Psoas muscle (tissue), 8 donors: ENCODE measurements at regions of chr12 and their contacts with region 1.

Region 1: GRCh38 chr12:119412811-119413794 is 78.6 kb downstream of the CCDC60 start:
- DNase-seq: peak; percentile 47 to 56
- ATAC-seq: peak; percentile 61 to 83 (median 72)
- H3K4me3 ChIP-seq: no peak overlapping the region
- H3K27ac ChIP-seq: no peak overlapping the region
- H3K4me1 ChIP-seq: peaks cover 4% of the 10 kb centered on the region
- H3K27me3 ChIP-seq: no peaks in the 10 kb centered on the region
- CTCF ChIP-seq: peak; percentile 90

Region 2: GRCh38 chr12:118979763-118980406 is 433.2 kb before region 1 on chr12:
- intact Hi-C with region 1: loop called (anchors 2 to 10 kb)
- DNase-seq: no peak
- ATAC-seq: peak in 3 of 4 donors; percentile 42 to 56 (median 53)
- H3K4me3 ChIP-seq: no peak overlapping the region
- H3K27ac ChIP-seq: no peak overlapping the region
- H3K4me1 ChIP-seq: no peaks in the 10 kb centered on the region
- H3K27me3 ChIP-seq: peaks cover 4 to 68% (median 19%) of the 10 kb centered on the region in 3 donors
- CTCF ChIP-seq: peak; percentile 61

Region 3: DNA sequence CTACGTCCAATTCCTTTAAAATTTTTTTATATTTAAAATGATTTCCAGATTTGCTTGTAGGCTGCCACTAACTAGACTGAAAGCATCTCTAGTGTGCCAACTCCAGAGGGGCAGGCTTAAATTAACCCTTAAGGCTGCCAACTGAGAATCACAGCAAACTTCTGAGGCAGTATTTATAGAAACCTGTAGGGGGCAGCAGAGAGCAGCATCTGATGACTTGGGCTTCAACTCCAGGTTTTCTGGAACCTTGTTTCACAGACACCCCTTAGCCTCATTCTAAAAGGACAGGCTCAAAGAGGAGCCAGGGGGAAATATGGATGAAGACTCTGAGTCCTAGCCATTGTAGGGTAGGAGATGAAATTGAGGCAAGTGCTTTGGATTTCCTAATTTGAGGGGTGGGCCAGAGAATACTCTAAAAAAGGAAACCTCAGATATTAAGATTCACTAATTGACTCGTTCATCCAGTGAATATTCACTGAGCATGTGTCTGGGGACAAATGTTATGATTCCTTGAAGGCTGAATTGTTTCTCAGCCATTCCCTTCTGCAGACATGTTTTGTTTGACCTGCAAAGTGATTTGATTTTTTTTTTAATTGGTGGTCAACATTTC is 297.7 kb before region 1 on chr12:
- intact Hi-C with region 1: loop called (anchors 1 to 2 kb)
- DNase-seq: no peak
- ATAC-seq: peak; percentile 81 to 90 (median 84)
- H3K4me3 ChIP-seq: peak overlapping the region; percentile 35
- H3K27ac ChIP-seq: no peak overlapping the region
- H3K4me1 ChIP-seq: peaks cover 15% of the 10 kb centered on the region
- H3K27me3 ChIP-seq: no peaks in the 10 kb centered on the region
- CTCF ChIP-seq: peak; percentile 94

Region 4: DNA sequence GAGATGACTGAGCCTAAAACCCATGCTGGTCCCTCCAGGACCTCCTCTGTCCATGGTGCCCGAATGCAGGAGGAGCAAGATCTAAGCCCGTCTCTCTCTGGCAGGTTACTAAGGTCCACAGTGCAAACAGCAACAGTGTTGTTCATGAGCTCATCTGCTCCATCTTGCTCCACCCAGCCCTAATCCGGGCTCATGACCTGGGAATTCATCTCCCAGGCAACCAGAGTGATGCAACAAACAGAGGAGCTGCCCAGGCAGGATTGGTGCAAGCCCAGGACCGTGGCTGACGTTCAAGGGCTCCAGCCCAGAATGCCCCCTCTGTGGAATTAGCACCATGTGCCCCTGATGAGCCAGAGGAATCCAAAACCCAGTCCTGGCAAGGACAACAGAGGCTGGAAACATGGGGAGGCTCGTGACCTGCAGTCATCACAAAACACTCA is 204.5 kb before region 1 on chr12:
- intact Hi-C with region 1: loop called in 1 of 2 experiments (anchors 10 kb)
- DNase-seq: peak; percentile 85 to 94
- ATAC-seq: peak; percentile 80 to 90 (median 87)
- H3K4me3 ChIP-seq: no peak overlapping the region
- H3K27ac ChIP-seq: peak overlapping the region; percentile 32
- H3K4me1 ChIP-seq: peaks cover 20% of the 10 kb centered on the region
- H3K27me3 ChIP-seq: peaks cover 0 to 2% (median 0%) of the 10 kb centered on the region in 3 donors
- CTCF ChIP-seq: no peak